ENCODE measurements at regions of chr7 and their contacts with region 1.

Region 1: DNA sequence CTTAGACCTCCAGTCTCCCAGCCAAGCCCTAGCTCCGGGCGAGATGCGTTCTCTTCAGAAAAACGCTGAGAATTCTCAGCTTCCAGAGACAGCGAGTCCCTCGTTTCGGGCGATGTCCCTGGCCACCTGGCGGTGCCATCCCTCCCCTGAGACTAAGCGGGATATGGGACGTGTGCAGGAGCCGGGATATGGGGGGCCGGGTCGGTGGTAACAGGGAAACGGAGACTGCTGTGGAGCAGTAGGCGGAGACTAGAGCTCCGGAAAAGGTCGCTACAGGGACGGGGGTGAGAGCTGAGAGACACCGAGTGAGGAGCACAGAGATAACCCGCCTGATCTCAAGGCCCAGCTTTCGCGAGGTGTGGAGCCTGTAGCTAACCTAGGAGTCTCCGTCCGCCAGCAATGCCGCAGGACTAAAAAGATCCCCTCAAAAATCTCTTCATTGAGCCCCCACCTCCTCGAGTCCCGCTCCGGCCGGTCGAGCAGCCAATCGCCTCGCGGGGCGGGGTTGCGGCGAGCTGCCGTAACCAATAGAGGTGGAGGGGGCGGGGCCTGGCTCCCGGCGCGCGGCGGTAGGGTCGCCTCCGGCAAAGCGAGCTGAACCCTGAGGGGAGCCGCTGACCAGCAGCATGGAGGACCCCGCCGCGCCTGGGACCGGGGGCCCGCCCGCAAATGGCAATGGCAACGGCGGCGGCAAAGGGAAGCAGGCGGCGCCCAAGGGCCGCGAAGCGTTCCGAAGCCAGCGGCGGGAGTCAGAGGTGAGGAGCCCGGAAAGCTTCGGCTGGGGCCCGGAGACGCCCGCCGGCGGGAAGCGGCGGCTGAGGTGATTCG is at the start of gene STRIP2:
- DNase-seq: peak; percentile 94 to 96
- ATAC-seq: peak; percentile 93 to 95 (median 94)
- H3K4me3 ChIP-seq: peak within 1 kb of the TSS; percentile 95
- H3K27ac ChIP-seq: peak within 1 kb of the TSS; percentile 91
- H3K4me1 ChIP-seq: peaks cover 6% of the 10 kb centered on the region
- H3K27me3 ChIP-seq: no peaks in the 10 kb centered on the region
- CTCF ChIP-seq: no peak
- total RNA-seq, gene STRIP2: 46.6 to 94.4 (median 58.4) TPM

Region 2: GRCh38 chr7:129394982-129395914 is 38.8 kb before region 1 on chr7:
- intact Hi-C with region 1: loop called in 1 of 2 experiments (anchors 5 kb)
- DNase-seq: no peak
- ATAC-seq: no peak
- H3K4me3 ChIP-seq: no peak overlapping the region
- H3K27ac ChIP-seq: peak overlapping the region; percentile 57
- H3K4me1 ChIP-seq: peaks cover 40% of the 10 kb centered on the region
- H3K27me3 ChIP-seq: no peaks in the 10 kb centered on the region
- CTCF ChIP-seq: no peak

Region 3: DNA sequence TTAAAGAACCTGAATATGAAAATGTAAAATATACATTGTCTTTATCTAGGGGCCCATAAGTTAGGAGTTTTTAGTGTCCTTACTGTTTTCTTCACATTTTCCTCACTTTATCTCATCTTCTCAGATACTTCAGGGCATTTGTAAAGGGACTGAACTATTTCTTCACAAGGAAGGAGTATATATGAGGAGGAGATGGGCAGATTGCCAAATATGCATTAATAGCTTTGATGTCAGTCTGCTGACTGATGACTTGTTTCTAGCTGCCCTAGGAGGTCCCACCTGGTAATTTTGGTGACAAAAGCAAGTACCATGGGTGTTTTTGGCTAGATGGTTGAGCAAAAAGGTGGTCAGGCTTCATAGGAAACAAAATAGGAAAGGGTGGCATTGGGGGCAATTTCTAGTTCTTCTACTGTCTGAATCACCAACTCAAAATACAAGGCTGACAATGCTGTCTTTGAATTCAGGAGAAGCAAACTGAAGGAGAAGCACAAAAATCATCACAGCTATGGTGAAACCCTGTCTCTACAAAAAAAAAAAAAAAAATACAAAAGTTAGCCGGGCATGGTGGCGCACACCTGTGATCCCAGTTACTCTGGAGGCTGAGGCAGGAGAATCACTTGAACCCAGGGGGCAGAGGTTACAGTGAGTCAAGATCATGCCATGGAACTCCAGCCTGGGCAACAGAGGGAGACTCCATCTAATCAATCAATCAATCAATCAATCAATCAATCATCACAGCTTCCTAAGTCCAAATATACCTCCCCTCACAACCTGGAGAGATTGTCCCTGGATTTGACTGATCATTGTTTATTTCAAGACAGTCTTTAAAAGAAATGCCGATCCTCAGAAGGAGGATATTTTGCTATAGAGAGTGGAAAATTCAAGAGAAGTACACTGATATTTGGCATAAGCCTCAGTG is 10.1 kb before region 1 on chr7:
- intact Hi-C with region 1: loop called in 1 of 2 experiments (anchors 2 kb)
- DNase-seq: no peak
- ATAC-seq: peak; percentile 21 to 35 (median 30)
- H3K4me3 ChIP-seq: no peak overlapping the region
- H3K27ac ChIP-seq: no peak overlapping the region
- H3K4me1 ChIP-seq: peaks cover 24% of the 10 kb centered on the region
- H3K27me3 ChIP-seq: no peaks in the 10 kb centered on the region
- CTCF ChIP-seq: no peak

Region 4: DNA sequence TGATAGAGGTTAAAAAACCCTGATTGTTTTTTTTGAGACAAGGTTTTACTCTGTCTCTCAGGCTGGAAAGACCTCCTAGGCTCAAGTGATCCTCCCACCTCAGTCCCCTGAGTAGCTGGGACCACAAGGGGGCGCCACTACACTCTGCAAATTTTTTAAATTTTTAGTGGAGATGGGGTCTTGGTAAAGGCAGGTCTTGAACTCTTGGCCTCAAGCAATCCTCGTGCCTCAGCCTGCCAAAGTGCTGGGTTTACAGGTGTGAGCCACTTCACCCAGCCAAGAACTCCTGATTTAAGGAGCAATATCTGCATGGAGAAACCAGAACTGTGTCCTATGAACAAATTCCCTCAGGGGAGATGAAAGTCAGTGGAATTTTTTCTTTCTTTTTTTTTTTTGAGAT is 629.0 kb after region 1 on chr7:
- intact Hi-C with region 1: no loop called
- DNase-seq: peak in 1 of 2 donors; percentile 29
- ATAC-seq: no peak
- H3K4me3 ChIP-seq: no peak overlapping the region
- H3K27ac ChIP-seq: no peak overlapping the region
- H3K4me1 ChIP-seq: peaks cover 5% of the 10 kb centered on the region
- H3K27me3 ChIP-seq: no peaks in the 10 kb centered on the region
- CTCF ChIP-seq: peak; percentile 39